A673 (cell line): ENCODE measurements at regions of chr1 and their contacts with region 1.

Region 1: DNA sequence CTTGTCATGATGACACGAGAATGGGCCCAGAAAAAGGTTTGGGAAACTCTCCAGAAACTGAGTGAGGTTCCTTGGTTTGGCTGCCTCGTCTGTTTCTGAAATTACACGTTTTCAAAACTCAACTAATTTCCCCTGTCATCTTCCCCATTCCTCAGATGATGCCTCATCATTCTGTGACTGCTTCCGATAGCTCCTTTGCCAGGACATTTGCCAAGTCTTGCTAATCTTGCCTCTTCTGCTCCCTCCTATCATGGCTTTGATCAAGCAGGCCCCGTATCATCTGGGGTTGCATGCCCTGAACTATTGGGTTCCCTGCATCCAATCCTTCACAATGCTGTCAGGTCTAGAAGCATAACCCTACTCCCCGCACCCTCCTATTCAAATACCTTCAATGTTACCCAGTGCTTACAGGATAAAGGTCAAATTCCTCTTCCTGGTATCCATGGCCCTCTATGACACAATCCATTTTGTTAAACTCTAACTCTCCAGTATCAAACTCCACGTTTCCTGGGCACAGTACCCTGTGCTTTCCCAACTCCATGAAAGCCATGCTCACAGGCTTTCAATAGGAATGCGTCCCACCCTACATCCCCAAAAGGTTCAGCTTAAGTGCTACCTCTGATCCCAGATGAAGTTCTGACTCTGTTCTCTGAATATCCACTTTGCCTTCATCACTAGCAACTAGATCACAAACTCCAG is 22.2 kb upstream of the TMEM200B start:
- DNase-seq: no peak
- H3K4me3 ChIP-seq: no peak overlapping the region
- H3K27ac ChIP-seq: no peak overlapping the region
- H3K4me1 ChIP-seq: no peaks in the 10 kb centered on the region
- H3K27me3 ChIP-seq: no peaks in the 10 kb centered on the region
- CTCF ChIP-seq: no peak

Region 2: DNA sequence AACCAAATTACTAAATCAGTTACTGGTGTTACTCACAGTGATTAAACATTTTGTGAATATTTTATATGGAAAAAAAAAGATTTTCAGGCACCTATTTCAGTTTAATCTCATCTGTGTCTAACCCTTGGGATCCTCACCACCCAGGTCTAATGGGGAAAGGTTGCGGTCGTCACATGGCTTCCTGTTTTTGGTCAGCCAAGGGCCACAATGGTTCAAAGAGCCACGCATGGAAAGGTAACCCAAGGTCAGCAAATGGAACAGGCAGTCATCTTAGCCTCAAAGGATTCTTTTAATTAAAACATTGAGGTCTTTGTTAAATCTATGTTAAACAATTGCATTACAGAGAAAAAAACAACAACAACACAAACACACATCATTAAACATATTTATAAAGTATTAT is 13.9 kb after region 1 on chr1:
- CTCF ChIA-PET with region 1: no interaction called
- POLR2A ChIA-PET with region 1: interaction called, 18 read pairs
- intact Hi-C with region 1: no loop called
- DNase-seq: no peak
- H3K4me3 ChIP-seq: no peak overlapping the region
- H3K27ac ChIP-seq: no peak overlapping the region
- H3K4me1 ChIP-seq: peaks cover 54% of the 10 kb centered on the region
- H3K27me3 ChIP-seq: no peaks in the 10 kb centered on the region
- CTCF ChIP-seq: no peak

Region 3: GRCh38 chr1:29282924-29283811 is 137.3 kb after region 1 on chr1:
- CTCF ChIA-PET with region 1: no interaction called
- POLR2A ChIA-PET with region 1: no interaction called
- intact Hi-C with region 1: no loop called
- DNase-seq: peak; percentile 87
- H3K4me3 ChIP-seq: no peak overlapping the region
- H3K27ac ChIP-seq: peak overlapping the region; percentile 15
- H3K4me1 ChIP-seq: peaks cover 9% of the 10 kb centered on the region
- H3K27me3 ChIP-seq: no peaks in the 10 kb centered on the region
- CTCF ChIP-seq: no peak